B cell (primary cell): ENCODE measurements at regions of chr1 and their contacts with region 1.

Region 1: GRCh38 chr1:205668951-205669340 is 11.4 kb downstream of the SLC45A3 start:
- DNase-seq: peak; percentile 88
- ATAC-seq: peak; percentile 68
- H3K4me3 ChIP-seq: peak overlapping the region in 2 of 5 experiments; percentile 29 to 47
- H3K4me3 Mint-ChIP-seq: peak overlapping the region; percentile 74
- H3K27ac ChIP-seq: peak overlapping the region; percentile 89 to 93
- H3K27ac Mint-ChIP-seq: peak overlapping the region; percentile 88
- H3K4me1 ChIP-seq: peaks cover 86 to 92% of the 10 kb centered on the region in 2 donors
- H3K4me1 Mint-ChIP-seq: peaks cover 78% of the 10 kb centered on the region
- H3K27me3 ChIP-seq: no peaks in the 10 kb centered on the region
- H3K27me3 Mint-ChIP-seq: no peaks in the 10 kb centered on the region
- CTCF ChIP-seq: peak; percentile 26

Region 2: DNA sequence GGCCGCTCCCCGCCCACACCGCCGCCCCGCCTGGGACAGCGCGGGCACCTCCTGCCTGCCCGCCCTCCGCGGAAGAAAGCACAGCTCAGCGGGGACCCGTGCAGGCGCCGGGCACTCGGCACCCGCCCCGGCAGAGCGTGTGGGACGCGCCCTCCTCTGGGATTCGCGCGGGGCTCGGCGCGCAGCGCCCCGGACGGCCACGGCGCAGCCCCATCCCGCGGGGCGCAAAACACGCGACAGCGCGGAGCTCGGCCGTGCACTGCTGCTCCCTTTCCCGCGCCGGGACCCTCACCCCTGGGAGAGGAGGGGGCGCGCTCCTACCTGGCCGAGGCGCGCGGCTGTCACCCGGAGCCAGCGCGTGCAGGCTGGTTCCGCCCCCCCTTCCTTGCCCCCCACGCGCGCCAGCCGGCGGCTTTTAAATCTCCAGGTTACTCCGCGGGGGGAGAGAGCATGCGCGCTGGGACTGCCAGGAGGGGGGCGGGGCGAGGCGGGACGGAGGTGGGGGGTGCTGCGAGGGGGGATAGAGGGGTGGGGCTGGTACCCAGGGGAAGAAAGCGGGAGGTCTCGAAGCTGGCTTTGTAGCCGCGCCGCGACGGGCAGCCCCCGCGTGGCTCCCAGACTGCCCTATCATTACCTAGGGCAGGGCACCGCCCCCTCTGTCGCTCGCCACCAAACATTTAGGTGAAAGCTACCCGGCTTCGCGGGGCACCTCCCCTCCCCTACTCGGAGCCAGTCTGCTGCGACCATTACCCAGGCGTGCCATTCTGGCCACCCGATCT is 11.3 kb after region 1 on chr1 and contains the start of gene SLC45A3:
- CTCF ChIA-PET with region 1: interaction called, 20 read pairs
- POLR2A ChIA-PET with region 1: interaction called, 9 read pairs
- intact Hi-C with region 1: loop called (anchors 1 kb)
- DNase-seq: peak; percentile 73
- ATAC-seq: peak; percentile 62
- H3K4me3 ChIP-seq: peak within 1 kb of the TSS; percentile 27 to 80 (median 70)
- H3K4me3 Mint-ChIP-seq: peak within 1 kb of the TSS; percentile 89
- H3K27ac ChIP-seq: peak within 1 kb of the TSS in 1 of 2 donors; percentile 62
- H3K27ac Mint-ChIP-seq: peak within 1 kb of the TSS; percentile 63
- H3K4me1 ChIP-seq: peaks cover 29 to 37% of the 10 kb centered on the region in 2 donors
- H3K4me1 Mint-ChIP-seq: peaks cover 32% of the 10 kb centered on the region
- H3K27me3 ChIP-seq: no peaks in the 10 kb centered on the region
- H3K27me3 Mint-ChIP-seq: no peaks in the 10 kb centered on the region
- CTCF ChIP-seq: no peak
- total RNA-seq, gene SLC45A3: 4.7 and 5.0 TPM in 2 replicates

Region 3: GRCh38 chr1:205766038-205766437 is 97.1 kb after region 1 on chr1:
- CTCF ChIA-PET with region 1: no interaction called
- POLR2A ChIA-PET with region 1: no interaction called
- intact Hi-C with region 1: no loop called
- DNase-seq: no peak
- ATAC-seq: no peak
- H3K4me3 ChIP-seq: no peak overlapping the region
- H3K4me3 Mint-ChIP-seq: no peak overlapping the region
- H3K27ac ChIP-seq: no peak overlapping the region
- H3K27ac Mint-ChIP-seq: no peak overlapping the region
- H3K4me1 ChIP-seq: no peaks in the 10 kb centered on the region
- H3K4me1 Mint-ChIP-seq: peaks cover 3% of the 10 kb centered on the region
- H3K27me3 ChIP-seq: no peaks in the 10 kb centered on the region
- H3K27me3 Mint-ChIP-seq: no peaks in the 10 kb centered on the region
- CTCF ChIP-seq: no peak